ENCODE measurements at regions of chr1 and their contacts with region 1.

Region 1: GRCh38 chr1:38201431-38201830 is 154.8 kb upstream of the POU3F1 start:
- DNase-seq: no peak
- H3K4me3 ChIP-seq: no peak overlapping the region
- CTCF ChIP-seq: no peak

Region 2: DNA sequence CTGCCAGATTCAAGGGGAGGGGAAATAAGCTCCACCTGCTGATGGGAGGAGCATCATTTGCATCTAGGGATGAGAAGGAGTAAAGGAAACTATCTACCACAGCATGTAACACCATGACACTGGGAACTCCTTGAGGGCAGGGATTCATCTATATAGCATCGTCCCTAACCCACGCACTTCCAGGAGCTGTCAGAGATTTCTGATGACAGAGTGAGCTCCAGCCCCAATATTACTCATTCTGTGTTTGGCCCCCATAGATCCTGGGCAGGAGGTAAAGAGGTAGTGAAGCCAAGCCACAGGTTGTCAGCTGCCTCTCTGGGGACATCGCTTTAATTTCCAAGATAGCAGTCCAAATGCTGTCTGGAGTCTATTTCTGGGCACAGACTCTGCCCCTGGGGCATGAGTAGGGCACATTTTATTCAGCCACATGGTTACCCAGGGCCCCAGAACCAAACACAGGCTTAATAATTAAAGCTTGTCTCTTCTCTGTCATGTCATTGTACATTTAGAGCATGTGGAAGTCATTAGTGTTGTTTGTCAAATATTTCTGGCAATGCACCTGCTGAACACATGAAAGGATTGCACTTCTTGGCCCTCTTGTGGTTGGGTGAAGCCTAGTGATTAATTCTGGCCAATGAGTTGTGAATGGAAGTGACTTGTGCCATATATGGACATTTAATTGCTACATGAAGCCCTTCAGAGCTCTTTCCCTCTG is 48.9 kb before region 1 on chr1:
- in situ Hi-C with region 1: loop called (anchors 5 kb)
- DNase-seq: no peak
- H3K4me3 ChIP-seq: no peak overlapping the region
- CTCF ChIP-seq: no peak

Measured in astrocyte of the cerebellum (primary cell).